ENCODE measurements at regions of chr14 and their contacts with region 1.

Region 1: GRCh38 chr14:92039719-92040430 is at the start of gene TRIP11:
- DNase-seq: peak; percentile 74 to 95
- H3K4me3 ChIP-seq: peak within 1 kb of the TSS; percentile 83 to 98 (median 95)
- H3K27ac ChIP-seq: peak within 1 kb of the TSS; percentile 96
- H3K4me1 ChIP-seq: peaks cover 0 to 5% (median 3%) of the 10 kb centered on the region in 4 experiments; a peak in 5 of 7 replicates
- H3K27me3 ChIP-seq: no peaks in the 10 kb centered on the region
- CTCF ChIP-seq: no peak
- EP300 ChIP-seq: no peak
- POLR2A ChIP-seq: peak; percentile 83
- RAD21 ChIP-seq: 0 out of 4 replicates have a peak, but pooled peaks of 1 of the 2 experiments have one; percentile 1
- total RNA-seq, gene TRIP11: 30.4 and 32.3 TPM in 2 replicates

Region 2: GRCh38 chr14:92057976-92058917 is 18.4 kb after region 1 on chr14:
- CTCF ChIA-PET with region 1: no interaction called
- POLR2A ChIA-PET with region 1: interaction called, 21 read pairs
- DNase-seq: peak in 1 of 2 experiments; percentile 26
- H3K4me3 ChIP-seq: no peak overlapping the region
- H3K27ac ChIP-seq: no peak overlapping the region
- H3K4me1 ChIP-seq: peaks cover 0 to 2% (median 0%) of the 10 kb centered on the region in 4 experiments; a peak in 2 of 7 replicates
- H3K27me3 ChIP-seq: no peaks in the 10 kb centered on the region; a peak in 1 of 7 replicates
- CTCF ChIP-seq: no peak
- EP300 ChIP-seq: no peak
- POLR2A ChIP-seq: no peak
- RAD21 ChIP-seq: no peak

Region 3: GRCh38 chr14:92106143-92106926 is 66.5 kb after region 1 on chr14 and contains the start of gene ATXN3:
- CTCF ChIA-PET with region 1: interaction called, 11 read pairs
- POLR2A ChIA-PET with region 1: interaction called, 11 read pairs
- DNase-seq: peak; percentile 86 to 91
- H3K4me3 ChIP-seq: peak within 1 kb of the TSS; percentile 69 to 97 (median 86)
- H3K27ac ChIP-seq: peak within 1 kb of the TSS; percentile 37; the same call in 1 of the 2 replicates
- H3K4me1 ChIP-seq: peaks cover 4 to 7% (median 6%) of the 10 kb centered on the region in 4 experiments; a peak in 6 of 7 replicates
- H3K27me3 ChIP-seq: no peaks in the 10 kb centered on the region
- CTCF ChIP-seq: peak; percentile 66 to 84 (median 82)
- EP300 ChIP-seq: peak in 1 of 2 experiments; percentile 13; a peak in 1 of 3 replicates
- POLR2A ChIP-seq: peak in 1 of 2 experiments; percentile 89; a peak in 2 of 3 replicates
- RAD21 ChIP-seq: peak; percentile 10 to 27; a peak in 2 of 4 replicates
- total RNA-seq, gene ATXN3: 31.7 and 37.2 TPM in 2 replicates

Region 4: DNA sequence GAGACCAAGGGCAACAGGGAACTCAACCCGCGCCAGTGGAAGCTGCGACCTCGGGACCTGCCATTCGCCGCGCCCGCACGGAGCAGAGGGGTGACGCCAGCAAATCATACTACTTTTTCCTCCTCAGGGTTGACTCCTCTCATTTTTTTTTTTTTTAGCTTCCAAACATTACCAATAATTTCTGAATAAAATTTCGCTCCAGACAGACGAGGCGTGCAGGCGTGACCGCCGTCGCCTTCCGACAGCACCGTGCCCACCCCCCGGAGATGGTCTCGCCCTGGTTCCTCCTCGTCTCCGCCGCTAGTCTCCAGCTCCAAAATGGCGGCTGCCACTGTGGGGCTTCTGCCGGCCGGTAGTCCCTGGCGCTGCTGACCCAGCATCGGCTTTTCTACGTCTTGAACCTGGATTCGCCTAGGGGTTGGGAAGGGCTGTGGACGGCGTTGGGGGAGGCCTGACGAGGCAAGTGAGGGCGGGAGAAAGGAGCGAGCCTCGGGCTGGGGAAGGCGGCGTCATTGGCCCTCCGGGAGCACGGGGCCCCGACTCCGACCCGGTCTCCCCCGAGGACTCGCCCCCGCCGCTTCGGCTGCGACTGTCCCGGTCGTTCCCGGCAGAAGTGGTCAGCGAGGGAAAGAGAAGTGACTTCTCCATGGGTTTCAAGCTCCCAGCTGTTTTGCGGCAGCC is 81.9 kb after region 1 on chr14 and contains the starts of genes CPSF2 and NDUFB1:
- CTCF ChIA-PET with region 1: no interaction called
- POLR2A ChIA-PET with region 1: interaction called, 24 read pairs
- DNase-seq: peak in 1 of 2 experiments; percentile 93
- H3K4me3 ChIP-seq: peak within 1 kb of the TSS; percentile 87 to 100 (median 98)
- H3K27ac ChIP-seq: peak within 1 kb of the TSS; percentile 97
- H3K4me1 ChIP-seq: peaks cover 0 to 3% (median 0%) of the 10 kb centered on the region in 4 experiments; a peak in 2 of 7 replicates
- H3K27me3 ChIP-seq: no peaks in the 10 kb centered on the region
- CTCF ChIP-seq: no peak
- EP300 ChIP-seq: peak in 1 of 2 experiments; percentile 98; a peak in 2 of 3 replicates
- POLR2A ChIP-seq: peak; percentile 87 to 96
- RAD21 ChIP-seq: no peak
- total RNA-seq, gene CPSF2: 130 and 141 TPM in 2 replicates
- total RNA-seq, gene NDUFB1: 124 and 127 TPM in 2 replicates

Region 5: DNA sequence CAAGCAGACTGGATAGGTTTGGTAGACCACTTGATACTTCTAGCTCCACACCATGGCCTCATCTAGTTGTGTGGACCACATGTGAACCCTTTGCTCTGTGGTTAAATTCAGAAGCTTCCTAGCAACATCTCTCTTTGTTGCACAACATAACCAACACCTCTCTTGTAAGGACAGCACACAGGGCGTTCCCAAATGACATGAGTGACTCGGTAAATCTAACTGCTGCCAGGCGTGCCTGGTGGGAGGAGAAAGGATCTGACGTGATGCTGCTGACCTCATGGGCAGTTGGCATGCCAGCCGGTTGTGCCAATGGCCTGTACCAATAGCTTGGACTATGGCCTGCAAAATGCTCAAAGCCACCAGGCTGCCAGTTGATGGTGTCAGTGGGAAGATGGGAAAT is 175.7 kb after region 1 on chr14:
- CTCF ChIA-PET with region 1: no interaction called
- POLR2A ChIA-PET with region 1: no interaction called
- DNase-seq: no peak
- H3K4me3 ChIP-seq: no peak overlapping the region
- H3K27ac ChIP-seq: no peak overlapping the region
- H3K4me1 ChIP-seq: no peaks in the 10 kb centered on the region
- H3K27me3 ChIP-seq: no peaks in the 10 kb centered on the region
- CTCF ChIP-seq: no peak
- EP300 ChIP-seq: no peak
- POLR2A ChIP-seq: no peak
- RAD21 ChIP-seq: no peak

Measured in H1 (cell line).